H1 (cell line): ENCODE measurements at regions of chr11 and their contacts with region 1.

Region 1: DNA sequence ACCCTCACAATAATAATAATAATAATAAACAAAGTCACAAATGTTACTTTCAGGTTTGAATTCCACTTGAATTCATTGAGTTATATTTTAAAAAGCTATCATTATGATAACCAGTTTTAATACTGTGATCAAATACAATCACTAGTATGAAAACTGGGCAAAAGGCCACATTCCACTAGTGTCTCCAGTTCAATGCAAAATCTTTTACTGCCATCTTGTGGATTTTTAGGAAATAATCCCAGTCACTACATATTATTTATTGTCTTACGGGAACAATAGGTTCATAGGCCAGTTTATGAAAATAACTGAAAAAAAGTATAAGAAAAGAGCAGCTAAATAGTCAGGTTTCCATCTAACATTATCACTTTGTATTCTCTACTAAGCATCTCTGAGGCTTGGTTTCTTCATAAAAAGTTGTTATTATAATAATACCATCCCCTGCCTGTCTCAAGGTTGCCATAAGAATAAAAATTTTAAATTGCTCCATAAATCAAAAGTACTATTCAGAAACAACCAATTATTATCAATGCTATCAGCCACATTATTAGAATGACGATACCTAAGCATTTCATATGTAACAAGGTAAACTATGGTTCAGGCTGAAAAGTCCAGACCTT is 533.9 kb upstream of the CCDC90B start:
- DNase-seq: no peak
- H3K4me3 ChIP-seq: no peak overlapping the region
- H3K27ac ChIP-seq: no peak overlapping the region
- H3K4me1 ChIP-seq: no peaks in the 10 kb centered on the region
- H3K27me3 ChIP-seq: no peaks in the 10 kb centered on the region
- CTCF ChIP-seq: peak in 2 of 3 experiments; percentile 35 to 40; a peak in 2 of 4 replicates
- EP300 ChIP-seq: no peak
- POLR2A ChIP-seq: no peak
- RAD21 ChIP-seq: peak; percentile 77 to 82

Region 2: GRCh38 chr11:83219095-83219494 is 600.9 kb before region 1 on chr11:
- CTCF ChIA-PET with region 1: interaction called, 17 read pairs
- POLR2A ChIA-PET with region 1: no interaction called
- DNase-seq: peak in 1 of 2 experiments; percentile 55
- H3K4me3 ChIP-seq: no peak overlapping the region
- H3K27ac ChIP-seq: no peak overlapping the region
- H3K4me1 ChIP-seq: no peaks in the 10 kb centered on the region
- H3K27me3 ChIP-seq: no peaks in the 10 kb centered on the region
- CTCF ChIP-seq: peak; percentile 60 to 76 (median 65)
- EP300 ChIP-seq: no peak
- POLR2A ChIP-seq: no peak
- RAD21 ChIP-seq: peak; percentile 79 to 80

Region 3: DNA sequence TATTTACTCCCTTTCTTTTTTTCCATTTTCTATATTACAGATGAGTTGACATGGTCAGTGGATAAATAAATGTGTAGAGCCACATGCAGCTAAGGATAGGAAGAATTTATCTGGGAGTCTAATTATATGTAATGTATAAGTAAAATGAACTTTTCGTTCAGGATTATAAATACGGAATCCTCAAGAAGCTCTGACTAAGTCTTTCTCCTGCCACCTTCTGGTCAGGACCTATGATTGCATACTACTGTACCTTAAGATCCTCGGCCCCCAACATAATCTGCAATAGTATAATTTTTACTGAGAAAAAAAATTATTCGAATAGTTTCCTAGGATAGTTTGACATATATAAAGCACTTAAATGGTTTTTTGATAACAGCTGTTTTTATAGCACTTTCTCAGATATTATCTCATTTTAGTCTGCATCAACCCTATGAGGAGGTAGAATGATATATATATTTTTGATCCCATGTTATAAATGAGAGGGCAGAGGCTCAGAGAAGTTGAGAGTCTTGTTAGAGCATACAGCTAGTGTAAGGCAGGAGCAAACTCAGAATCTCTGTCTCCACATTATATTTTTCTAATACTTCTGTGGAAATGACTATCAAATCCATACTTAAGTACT is 570.0 kb before region 1 on chr11:
- CTCF ChIA-PET with region 1: interaction called, 29 read pairs
- POLR2A ChIA-PET with region 1: no interaction called
- DNase-seq: no peak
- H3K4me3 ChIP-seq: no peak overlapping the region
- H3K27ac ChIP-seq: no peak overlapping the region
- H3K4me1 ChIP-seq: no peaks in the 10 kb centered on the region
- H3K27me3 ChIP-seq: no peaks in the 10 kb centered on the region
- CTCF ChIP-seq: peak in 2 of 3 experiments; percentile 41 to 45; a peak in 2 of 4 replicates
- EP300 ChIP-seq: no peak
- POLR2A ChIP-seq: no peak
- RAD21 ChIP-seq: peak; percentile 49 to 61

Region 4: DNA sequence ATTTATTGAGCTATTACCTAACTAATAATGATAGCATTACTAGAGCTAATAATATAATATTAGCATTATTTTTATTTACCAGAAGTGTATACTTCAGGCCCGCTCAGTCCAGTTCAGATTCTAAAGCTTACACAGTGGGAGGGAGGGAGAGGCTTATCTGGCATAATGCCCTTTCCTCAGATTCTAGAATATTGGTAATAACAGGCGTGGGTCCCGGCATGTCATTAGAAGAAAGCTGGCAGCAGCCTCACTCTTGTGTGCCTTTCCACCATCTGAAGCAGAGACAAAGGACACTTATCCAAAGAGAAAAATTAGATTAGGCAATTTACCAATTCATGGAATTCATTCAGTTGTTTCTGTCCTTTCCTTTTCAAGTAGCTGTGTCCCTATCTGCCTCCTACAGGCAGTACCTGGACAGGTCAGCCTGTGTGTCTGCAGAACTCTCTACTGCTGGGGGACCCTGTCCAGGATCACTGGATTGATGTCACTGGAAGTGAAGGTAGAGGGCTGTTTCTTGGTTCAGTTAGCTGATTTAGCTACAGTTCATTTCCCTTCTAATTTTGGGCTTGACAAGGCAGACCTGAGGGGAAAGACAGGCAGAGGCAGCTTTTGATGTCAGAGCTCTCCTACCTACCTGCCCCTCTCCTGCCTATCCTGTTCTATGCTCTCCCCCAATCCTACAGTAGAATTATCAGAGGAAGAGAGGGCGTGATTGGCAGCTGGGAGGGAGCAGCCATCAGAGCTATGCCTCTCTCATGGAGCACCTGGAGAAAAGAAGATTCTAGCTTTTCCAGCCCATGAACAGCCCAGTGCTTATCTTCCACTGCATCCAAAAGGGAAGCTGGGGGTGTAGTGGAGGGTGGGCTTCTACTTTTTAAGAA is 513.6 kb before region 1 on chr11:
- CTCF ChIA-PET with region 1: interaction called, 10 read pairs
- POLR2A ChIA-PET with region 1: no interaction called
- DNase-seq: no peak
- H3K4me3 ChIP-seq: no peak overlapping the region
- H3K27ac ChIP-seq: no peak overlapping the region
- H3K4me1 ChIP-seq: no peaks in the 10 kb centered on the region; a peak in 1 of 7 replicates
- H3K27me3 ChIP-seq: no peaks in the 10 kb centered on the region
- CTCF ChIP-seq: peak in 2 of 3 experiments; percentile 3 to 51; a peak in 3 of 4 replicates
- EP300 ChIP-seq: no peak
- POLR2A ChIP-seq: no peak
- RAD21 ChIP-seq: peak; percentile 7 to 31; a peak in 2 of 4 replicates

Region 5: GRCh38 chr11:83706581-83706980 is 113.5 kb before region 1 on chr11:
- CTCF ChIA-PET with region 1: interaction called, 12 read pairs
- POLR2A ChIA-PET with region 1: no interaction called
- DNase-seq: no peak
- H3K4me3 ChIP-seq: no peak overlapping the region
- H3K27ac ChIP-seq: no peak overlapping the region
- H3K4me1 ChIP-seq: no peaks in the 10 kb centered on the region
- H3K27me3 ChIP-seq: no peaks in the 10 kb centered on the region
- CTCF ChIP-seq: no peak
- EP300 ChIP-seq: no peak
- POLR2A ChIP-seq: no peak
- RAD21 ChIP-seq: no peak

Region 6: DNA sequence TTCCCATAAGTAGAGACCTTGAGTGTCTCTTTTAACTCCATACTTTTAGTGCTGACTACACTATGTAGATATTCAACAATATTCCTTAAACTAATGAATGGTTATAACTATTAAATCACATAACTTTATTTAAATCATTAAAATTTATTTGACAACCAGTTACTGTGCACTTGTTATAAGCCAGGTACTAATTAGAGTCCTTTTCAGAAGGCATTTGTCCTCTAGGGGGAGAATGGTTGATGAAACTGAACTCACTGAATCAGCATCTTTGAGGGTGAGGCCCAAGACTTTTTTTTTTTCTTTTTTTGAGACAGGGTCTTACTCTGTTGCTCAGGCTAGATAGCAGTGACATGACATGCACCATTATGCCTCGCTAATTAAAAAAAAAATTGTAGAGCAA is 18.3 kb before region 1 on chr11:
- CTCF ChIA-PET with region 1: interaction called, 30 read pairs
- POLR2A ChIA-PET with region 1: no interaction called
- DNase-seq: no peak
- H3K4me3 ChIP-seq: no peak overlapping the region
- H3K27ac ChIP-seq: no peak overlapping the region
- H3K4me1 ChIP-seq: no peaks in the 10 kb centered on the region
- H3K27me3 ChIP-seq: no peaks in the 10 kb centered on the region
- CTCF ChIP-seq: 0 out of 4 replicates have a peak, but pooled peaks of 1 of the 3 experiments have one; percentile 5
- EP300 ChIP-seq: no peak
- POLR2A ChIP-seq: no peak
- RAD21 ChIP-seq: peak; percentile 3 to 18; a peak in 1 of 4 replicates

Region 7: GRCh38 chr11:83865636-83866461 is 45.8 kb after region 1 on chr11:
- CTCF ChIA-PET with region 1: no interaction called
- POLR2A ChIA-PET with region 1: no interaction called
- DNase-seq: no peak
- H3K4me3 ChIP-seq: no peak overlapping the region
- H3K27ac ChIP-seq: no peak overlapping the region
- H3K4me1 ChIP-seq: no peaks in the 10 kb centered on the region
- H3K27me3 ChIP-seq: no peaks in the 10 kb centered on the region
- CTCF ChIP-seq: no peak
- EP300 ChIP-seq: no peak
- POLR2A ChIP-seq: no peak
- RAD21 ChIP-seq: no peak